ENCODE measurements at regions of chr19 and their contacts with region 1.

Region 1: GRCh38 chr19:43555185-43555770 is 20.0 kb downstream of the XRCC1 start:
- DNase-seq: peak; percentile 92
- ATAC-seq: peak; percentile 98
- H3K4me3 Mint-ChIP-seq: no peak overlapping the region
- H3K27ac Mint-ChIP-seq: peak overlapping the region; percentile 84
- H3K4me1 Mint-ChIP-seq: peaks cover 7% of the 10 kb centered on the region
- H3K27me3 Mint-ChIP-seq: no peaks in the 10 kb centered on the region
- CTCF ChIP-seq: peak; percentile 64

Region 2: DNA sequence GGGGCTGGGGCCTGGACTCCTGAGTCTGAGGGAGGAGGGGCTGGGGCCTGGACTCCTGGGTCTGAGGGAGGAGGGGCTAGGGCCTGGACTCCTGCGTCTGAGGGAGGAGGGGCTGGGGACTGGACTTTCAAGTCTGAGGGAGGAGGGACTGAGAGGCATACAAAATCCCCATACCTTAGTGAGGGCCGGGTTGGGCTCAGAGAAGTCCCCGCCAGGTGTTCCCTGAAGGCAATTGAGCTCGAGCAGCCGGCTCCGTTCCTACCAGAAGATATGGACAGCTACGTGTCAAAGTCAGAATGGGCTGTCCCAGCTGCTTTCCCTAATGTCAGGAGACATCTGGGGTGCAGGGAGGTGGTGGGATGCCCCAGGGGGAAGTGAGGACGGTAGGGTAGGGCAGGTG is 60.2 kb before region 1 on chr19:
- CTCF ChIA-PET with region 1: no interaction called
- POLR2A ChIA-PET with region 1: no interaction called
- DNase-seq: no peak
- ATAC-seq: no peak
- H3K4me3 Mint-ChIP-seq: no peak overlapping the region
- H3K27ac Mint-ChIP-seq: no peak overlapping the region
- H3K4me1 Mint-ChIP-seq: no peaks in the 10 kb centered on the region
- H3K27me3 Mint-ChIP-seq: no peaks in the 10 kb centered on the region; the same call in 1 of the 2 replicates
- CTCF ChIP-seq: no peak

Region 3: DNA sequence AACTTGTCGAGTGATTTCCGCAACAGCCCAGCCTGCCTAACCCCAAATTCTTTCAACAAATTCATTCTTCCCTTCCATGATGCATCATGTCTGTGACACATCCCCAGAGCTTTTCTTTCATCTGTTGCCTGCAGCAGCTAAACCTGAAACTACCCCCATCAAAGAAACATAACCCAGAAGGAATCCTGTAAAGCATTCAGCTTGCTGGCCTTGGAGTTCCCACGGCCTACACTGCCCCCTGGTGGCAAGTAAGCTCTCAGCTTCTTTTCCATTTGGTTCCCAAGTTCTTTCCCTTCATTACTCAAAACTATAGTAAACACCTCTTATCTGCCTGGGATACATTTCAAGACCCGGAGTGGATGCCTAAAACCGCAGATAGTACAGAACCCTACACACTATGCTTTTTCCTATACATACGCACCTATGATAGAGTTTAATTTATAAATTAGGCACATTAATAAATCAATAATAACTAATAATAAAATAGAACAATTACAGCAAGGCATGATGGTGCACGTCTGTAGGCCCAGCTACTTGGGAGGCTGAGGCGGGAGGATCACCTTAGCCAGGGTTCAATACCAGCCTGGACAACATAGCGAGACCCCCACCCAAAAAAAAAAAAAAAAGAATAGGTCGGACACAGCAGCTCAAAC is 35.7 kb before region 1 on chr19:
- CTCF ChIA-PET with region 1: interaction called, 20 read pairs
- POLR2A ChIA-PET with region 1: no interaction called
- DNase-seq: peak; percentile 83
- ATAC-seq: no peak; the same call in 1 of the 2 replicates
- H3K4me3 Mint-ChIP-seq: no peak overlapping the region
- H3K27ac Mint-ChIP-seq: peak overlapping the region; percentile 32; the same call in 1 of the 2 replicates
- H3K4me1 Mint-ChIP-seq: peaks cover 3% of the 10 kb centered on the region
- H3K27me3 Mint-ChIP-seq: no peaks in the 10 kb centered on the region
- CTCF ChIP-seq: peak; percentile 92

Region 4: DNA sequence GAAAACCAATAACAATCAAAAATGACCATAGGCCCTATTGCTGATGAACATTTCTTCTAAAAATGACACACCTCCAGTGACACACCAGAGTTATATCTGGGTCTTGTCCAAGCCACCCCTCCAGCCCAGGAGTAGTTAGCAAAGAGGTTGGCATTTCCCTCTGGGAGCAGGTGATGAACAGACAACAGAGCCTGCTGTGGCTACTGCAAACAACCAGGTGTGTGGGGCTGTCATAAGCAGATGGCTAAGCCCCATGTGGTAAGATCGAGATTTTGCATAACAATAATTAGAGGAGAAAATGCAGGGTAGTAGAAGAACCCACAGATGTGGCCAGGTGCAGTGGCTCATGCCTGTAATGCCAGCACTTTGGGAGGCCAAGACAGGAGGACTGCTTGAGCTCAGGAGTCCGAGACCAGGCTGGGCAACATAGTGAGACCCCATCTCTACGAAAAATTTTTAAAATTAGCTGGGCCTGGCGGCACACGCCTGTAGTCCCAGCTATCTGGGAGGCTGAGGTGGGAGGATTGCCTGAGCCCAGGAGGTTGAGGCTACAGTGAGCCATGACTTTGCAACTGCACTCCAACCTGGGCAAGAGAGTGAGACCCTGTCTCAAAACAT is 15.0 kb after region 1 on chr19:
- CTCF ChIA-PET with region 1: interaction called, 20 read pairs
- POLR2A ChIA-PET with region 1: no interaction called
- DNase-seq: no peak
- ATAC-seq: peak; percentile 48
- H3K4me3 Mint-ChIP-seq: no peak overlapping the region
- H3K27ac Mint-ChIP-seq: peak overlapping the region; percentile 74
- H3K4me1 Mint-ChIP-seq: peaks cover 12% of the 10 kb centered on the region
- H3K27me3 Mint-ChIP-seq: no peaks in the 10 kb centered on the region
- CTCF ChIP-seq: no peak

Region 5: DNA sequence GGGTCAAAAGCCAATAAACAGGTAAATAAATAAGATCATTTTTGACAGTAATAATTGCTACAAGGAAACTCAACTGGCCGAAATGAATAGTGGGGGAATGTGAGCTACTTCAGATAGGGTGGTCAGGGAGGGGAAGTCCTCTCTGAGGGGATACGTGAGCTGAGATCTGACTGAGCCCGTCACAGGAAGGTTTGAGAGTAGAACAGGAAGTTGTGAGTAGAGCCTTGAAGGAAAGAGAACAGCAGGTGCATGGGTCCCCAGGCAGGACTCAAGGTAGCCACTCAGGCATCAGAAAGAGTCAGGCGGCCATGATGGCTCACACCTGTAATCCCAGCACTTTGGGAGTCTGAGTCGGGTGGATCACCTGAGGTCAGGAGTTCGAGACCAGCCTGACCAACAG is 34.4 kb after region 1 on chr19:
- CTCF ChIA-PET with region 1: interaction called, 130 read pairs
- POLR2A ChIA-PET with region 1: interaction called, 6 read pairs
- DNase-seq: no peak
- ATAC-seq: no peak
- H3K4me3 Mint-ChIP-seq: no peak overlapping the region
- H3K27ac Mint-ChIP-seq: no peak overlapping the region
- H3K4me1 Mint-ChIP-seq: no peaks in the 10 kb centered on the region
- H3K27me3 Mint-ChIP-seq: no peaks in the 10 kb centered on the region
- CTCF ChIP-seq: no peak

Region 6: DNA sequence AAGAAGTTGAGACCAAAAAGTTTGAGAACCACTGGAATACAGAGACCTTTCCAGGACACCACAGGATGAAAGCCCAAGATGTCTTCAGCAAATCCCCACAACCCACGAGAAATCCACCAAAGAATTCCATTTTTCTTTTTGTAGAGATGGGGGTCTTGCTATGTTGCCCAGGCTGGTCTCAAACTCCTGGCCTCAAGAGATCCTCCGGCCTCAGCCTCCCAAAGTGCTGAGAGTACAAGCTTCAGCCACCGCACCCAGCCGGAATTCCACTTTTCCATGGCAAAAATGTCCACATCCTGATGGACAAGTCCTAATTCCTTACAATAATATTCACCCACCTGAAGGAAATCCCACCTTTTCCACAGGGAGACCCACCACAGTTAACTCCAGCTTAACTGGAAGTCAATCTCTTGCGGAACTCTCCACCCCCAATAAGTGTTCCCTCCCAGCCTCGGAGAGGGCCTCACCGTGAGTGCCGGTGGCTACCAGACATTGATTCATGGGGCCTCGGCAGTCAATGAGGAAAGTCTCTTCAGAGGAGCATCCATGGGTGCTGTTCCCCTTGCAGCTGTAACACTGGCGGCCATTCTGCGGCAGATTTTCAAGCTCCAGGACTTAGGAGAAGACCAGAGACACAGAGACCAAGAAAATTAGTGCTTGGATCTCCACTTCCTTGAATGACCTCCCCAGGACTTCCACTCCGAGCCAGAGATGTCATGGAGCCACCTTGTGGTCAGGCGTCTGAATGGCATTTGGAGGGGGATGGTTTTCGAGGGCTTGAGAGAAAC is 96.7 kb after region 1 on chr19:
- CTCF ChIA-PET with region 1: interaction called, 20 read pairs
- POLR2A ChIA-PET with region 1: no interaction called
- DNase-seq: peak; percentile 74
- ATAC-seq: peak; percentile 88
- H3K4me3 Mint-ChIP-seq: no peak overlapping the region
- H3K27ac Mint-ChIP-seq: 0 out of 2 replicates have a peak overlapping the region, but pooled peaks have one; percentile 78
- H3K4me1 Mint-ChIP-seq: peaks cover 2% of the 10 kb centered on the region; the same call in 1 of the 2 replicates
- H3K27me3 Mint-ChIP-seq: peaks cover 2% of the 10 kb centered on the region; the same call in 1 of the 2 replicates
- CTCF ChIP-seq: peak; percentile 62

Region 7: GRCh38 chr19:43678512-43679261 is 123.4 kb after region 1 on chr19:
- CTCF ChIA-PET with region 1: no interaction called
- POLR2A ChIA-PET with region 1: no interaction called
- DNase-seq: no peak
- ATAC-seq: no peak
- H3K4me3 Mint-ChIP-seq: no peak overlapping the region
- H3K27ac Mint-ChIP-seq: no peak overlapping the region
- H3K4me1 Mint-ChIP-seq: peaks cover 8% of the 10 kb centered on the region
- H3K27me3 Mint-ChIP-seq: no peaks in the 10 kb centered on the region
- CTCF ChIP-seq: no peak